ENCODE measurements at regions of chr17 and their contacts with region 1.

Region 1: DNA sequence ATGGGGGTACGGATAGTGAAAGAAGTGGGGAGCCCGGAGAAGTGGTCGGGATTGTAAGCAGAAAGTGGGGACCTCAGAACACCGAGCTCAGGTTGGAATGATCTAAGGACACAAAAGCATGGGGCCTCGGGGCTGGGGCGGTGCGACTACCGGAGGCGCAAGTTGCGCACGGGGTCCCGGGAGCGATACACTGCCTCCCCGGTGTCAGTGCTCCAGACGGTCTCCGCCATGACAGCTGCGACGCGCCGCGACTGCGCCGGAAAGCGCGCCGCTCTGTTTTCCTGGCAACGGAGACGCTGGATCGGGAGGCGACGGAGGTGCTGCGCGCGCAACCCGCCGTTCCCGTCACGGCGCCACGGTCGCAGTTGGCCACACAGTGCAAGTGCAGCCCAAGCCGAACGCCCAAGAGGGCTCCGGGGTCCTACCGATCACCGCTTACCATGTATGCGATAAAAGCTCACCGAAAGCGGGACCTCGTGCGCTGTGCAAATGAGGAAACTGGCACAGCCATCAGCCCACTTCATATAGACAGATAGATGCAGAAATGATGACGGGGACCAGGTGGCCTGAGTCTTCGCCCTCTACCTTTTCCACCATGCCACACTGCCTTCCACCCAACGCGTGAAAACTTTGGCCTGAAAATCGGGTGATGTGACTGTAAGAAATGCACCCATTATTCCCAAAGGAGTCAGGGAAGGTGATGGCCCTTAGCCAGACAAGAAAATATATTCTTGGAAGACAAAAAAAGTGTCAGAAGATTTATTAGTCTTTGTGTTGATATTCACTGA is at the start of gene MKS1:
- DNase-seq: peak; percentile 94
- H3K4me3 Mint-ChIP-seq: peak within 1 kb of the TSS; percentile 92
- H3K27ac Mint-ChIP-seq: peak within 1 kb of the TSS; percentile 96
- H3K4me1 Mint-ChIP-seq: peaks cover 26% of the 10 kb centered on the region
- H3K27me3 Mint-ChIP-seq: peaks cover 11% of the 10 kb centered on the region
- total RNA-seq, gene MKS1: 18.8 and 23.3 TPM in 2 replicates

Region 2: GRCh38 chr17:58249270-58250133 is 30.3 kb after region 1 on chr17:
- intact Hi-C with region 1: loop called (anchors 1 kb)
- DNase-seq: peak; percentile 64
- H3K4me3 Mint-ChIP-seq: peak overlapping the region; percentile 72
- H3K27ac Mint-ChIP-seq: no peak overlapping the region
- H3K4me1 Mint-ChIP-seq: peaks cover 16% of the 10 kb centered on the region
- H3K27me3 Mint-ChIP-seq: peaks cover 43% of the 10 kb centered on the region

Region 3: GRCh38 chr17:58329035-58329809 is 110.0 kb after region 1 on chr17:
- intact Hi-C with region 1: loop called (anchors 2 kb)
- DNase-seq: peak; percentile 81
- H3K4me3 Mint-ChIP-seq: peak overlapping the region; percentile 100
- H3K27ac Mint-ChIP-seq: peak overlapping the region; percentile 93
- H3K4me1 Mint-ChIP-seq: peaks cover 45% of the 10 kb centered on the region
- H3K27me3 Mint-ChIP-seq: peaks cover 2% of the 10 kb centered on the region

Region 4: DNA sequence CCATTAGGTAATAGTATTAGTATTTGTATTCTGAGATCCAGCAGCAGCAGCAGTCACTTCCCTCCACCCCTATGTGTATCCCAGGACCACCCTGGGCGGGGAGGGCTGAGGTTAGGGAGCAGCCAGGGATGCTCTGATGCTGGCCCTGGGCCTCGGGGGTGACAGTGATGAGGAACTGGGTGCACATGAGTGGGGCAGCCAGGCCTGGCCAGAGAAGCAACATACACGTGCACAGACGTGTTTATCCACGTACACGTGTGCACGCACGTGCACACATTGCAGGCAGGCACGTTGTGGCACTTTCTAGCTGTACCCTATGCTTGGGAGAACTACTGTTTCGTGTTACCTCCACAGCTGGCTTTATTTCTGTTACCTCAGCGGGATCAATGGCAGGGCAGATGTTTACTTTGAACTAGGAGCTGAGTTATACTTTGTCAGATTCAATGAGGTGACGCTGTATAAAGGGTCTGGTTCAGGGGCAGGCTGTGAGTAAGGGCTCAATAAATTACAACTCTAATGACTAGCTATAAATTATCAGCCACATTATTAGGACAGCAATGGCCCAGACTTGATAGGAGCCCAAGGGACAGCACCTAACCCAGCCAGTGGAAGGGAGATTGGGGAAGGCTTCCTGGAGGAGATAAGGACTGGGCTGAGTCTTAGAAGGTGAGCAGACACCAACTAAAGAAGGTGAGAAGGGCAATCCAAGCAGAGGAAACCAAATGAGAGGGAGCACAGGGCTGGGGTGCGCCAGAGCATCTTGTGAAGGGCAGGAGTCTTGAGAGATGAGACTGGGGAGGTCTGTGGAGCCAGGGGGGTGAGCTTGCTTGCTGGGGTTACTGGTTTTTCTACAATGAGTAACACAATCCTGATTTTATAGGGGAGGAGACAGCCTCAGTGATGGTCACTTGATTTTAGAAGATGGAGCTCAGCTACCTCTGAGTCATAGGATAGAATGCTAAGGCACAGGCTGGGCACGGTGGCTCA is 1908.2 kb after region 1 on chr17:
- intact Hi-C with region 1: no loop called
- DNase-seq: no peak
- H3K4me3 Mint-ChIP-seq: no peak overlapping the region
- H3K27ac Mint-ChIP-seq: no peak overlapping the region
- H3K4me1 Mint-ChIP-seq: no peaks in the 10 kb centered on the region
- H3K27me3 Mint-ChIP-seq: no peaks in the 10 kb centered on the region

Measured in activated T-helper 1 cell treated with anti-CD3 and anti-CD28 coated beads, Interleukin-12 subunit alpha, Interleukin-12 subunit beta, Interleukin-2, Interleukin-4 antibody, amounts not matched to agents 30 ng/mL and 10 ng/mL and 1 ng/mL, durations not matched to agents 14 hours and 24 hours and 36 hours (primary cell).